H1 (cell line): ENCODE measurements at regions of chr12 and their contacts with region 1.

Region 1: GRCh38 chr12:112992541-112993398 is 14.5 kb downstream of the OAS2 start:
- DNase-seq: peak; percentile 29 to 91
- H3K4me3 ChIP-seq: no peak overlapping the region
- H3K27ac ChIP-seq: no peak overlapping the region
- H3K4me1 ChIP-seq: no peaks in the 10 kb centered on the region; a peak in 1 of 7 replicates
- H3K27me3 ChIP-seq: no peaks in the 10 kb centered on the region
- CTCF ChIP-seq: peak; percentile 90 to 99 (median 99)
- EP300 ChIP-seq: no peak
- POLR2A ChIP-seq: no peak
- RAD21 ChIP-seq: peak; percentile 89 to 93

Region 2: DNA sequence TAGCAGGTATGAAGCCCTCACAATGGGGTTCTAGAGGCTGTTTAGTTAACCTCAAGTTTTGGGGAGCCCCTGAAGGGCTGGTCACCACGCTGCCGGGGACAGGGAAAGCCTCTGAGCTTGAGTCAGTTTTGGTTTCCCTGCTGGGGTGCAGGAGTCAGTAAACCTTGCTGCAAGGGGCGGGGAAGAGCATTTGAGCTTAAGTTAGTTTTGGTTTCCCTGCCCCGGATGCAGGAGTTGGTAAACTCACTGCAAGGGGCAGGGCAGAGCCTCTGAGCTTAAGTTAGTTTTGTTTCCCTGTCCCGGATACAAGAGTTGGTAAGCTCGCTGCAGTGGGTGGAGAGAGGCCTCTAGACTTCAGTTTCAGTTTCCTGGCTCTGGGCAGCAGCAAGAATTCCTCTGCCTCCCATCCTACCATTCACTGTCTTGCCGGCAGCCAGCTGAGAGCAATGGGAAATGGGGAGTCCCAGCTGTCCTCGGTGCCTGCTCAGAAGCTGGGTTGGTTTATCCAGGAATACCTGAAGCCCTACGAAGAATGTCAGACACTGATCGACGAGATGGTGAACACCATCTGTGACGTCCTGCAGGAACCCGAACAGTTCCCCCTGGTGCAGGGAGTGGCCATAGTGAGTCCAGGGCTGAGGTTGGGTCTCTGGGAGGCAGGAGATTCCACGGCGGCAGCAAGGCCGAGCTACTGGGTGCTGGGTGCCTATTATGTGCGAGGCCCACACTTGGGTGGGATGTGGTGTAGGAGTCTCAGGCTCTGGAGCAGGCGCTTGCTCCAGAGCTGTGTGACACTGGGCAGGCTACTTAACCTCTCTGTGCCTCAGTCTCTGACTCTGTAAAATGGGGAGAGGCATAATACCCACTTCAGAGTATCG is 14.4 kb before region 1 on chr12 and contains the start of gene OAS2:
- CTCF ChIA-PET with region 1: interaction called, 24 read pairs
- POLR2A ChIA-PET with region 1: no interaction called
- DNase-seq: no peak
- H3K4me3 ChIP-seq: no peak within 1 kb of the TSS
- H3K27ac ChIP-seq: no peak within 1 kb of the TSS
- H3K4me1 ChIP-seq: peaks cover 0 to 5% (median 0%) of the 10 kb centered on the region in 4 experiments; a peak in 1 of 7 replicates
- H3K27me3 ChIP-seq: no peaks in the 10 kb centered on the region; a peak in 2 of 7 replicates
- CTCF ChIP-seq: no peak
- EP300 ChIP-seq: no peak
- POLR2A ChIP-seq: no peak
- RAD21 ChIP-seq: no peak
- total RNA-seq, gene OAS2: not detected in 2 replicates

Region 3: DNA sequence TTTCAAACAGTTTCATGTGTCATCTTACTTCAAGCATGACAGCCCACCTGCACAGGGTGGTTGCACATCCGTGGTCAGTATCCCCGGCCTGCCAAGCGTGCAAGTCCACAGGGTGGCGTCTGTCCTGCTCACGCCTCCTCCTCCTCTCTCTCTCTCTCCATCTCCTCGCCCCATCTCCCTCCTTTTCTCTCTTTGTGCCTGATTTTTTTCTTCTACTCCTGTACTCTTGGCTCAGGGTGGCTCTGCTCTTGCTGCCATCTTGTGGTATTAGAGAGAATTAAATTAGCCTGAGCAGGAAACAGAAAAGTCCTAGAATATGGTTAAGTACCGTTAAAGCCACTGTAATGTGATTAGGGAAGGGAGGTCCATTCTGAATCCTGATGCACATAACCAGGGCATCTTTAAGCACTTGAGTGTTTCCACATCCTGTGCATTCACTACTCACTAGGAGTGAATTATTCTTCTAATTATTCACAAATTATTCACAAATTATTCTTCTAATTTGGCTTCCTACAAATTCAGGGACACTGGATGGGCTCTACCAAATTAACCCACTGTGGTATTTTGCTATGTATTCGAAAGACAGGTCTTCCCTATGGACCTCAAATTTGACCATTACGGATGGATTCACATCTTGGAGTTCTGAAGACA is 38.2 kb after region 1 on chr12:
- CTCF ChIA-PET with region 1: interaction called, 55 read pairs
- POLR2A ChIA-PET with region 1: no interaction called
- DNase-seq: peak; percentile 34 to 51
- H3K4me3 ChIP-seq: no peak overlapping the region
- H3K27ac ChIP-seq: no peak overlapping the region
- H3K4me1 ChIP-seq: peaks cover 0 to 4% (median 2%) of the 10 kb centered on the region in 4 experiments; a peak in 4 of 7 replicates
- H3K27me3 ChIP-seq: no peaks in the 10 kb centered on the region
- CTCF ChIP-seq: peak; percentile 54 to 84 (median 65)
- EP300 ChIP-seq: no peak
- POLR2A ChIP-seq: no peak
- RAD21 ChIP-seq: peak; percentile 67 to 77

Region 4: GRCh38 chr12:113065126-113066007 is 72.6 kb after region 1 on chr12:
- CTCF ChIA-PET with region 1: interaction called, 28 read pairs
- POLR2A ChIA-PET with region 1: no interaction called
- DNase-seq: peak in 1 of 2 experiments; percentile 91
- H3K4me3 ChIP-seq: peak overlapping the region in 3 of 4 experiments; percentile 8 to 52 (median 19); a peak in 5 of 8 replicates
- H3K27ac ChIP-seq: no peak overlapping the region
- H3K4me1 ChIP-seq: peaks cover 0 to 27% (median 15%) of the 10 kb centered on the region in 4 experiments; a peak in 6 of 7 replicates
- H3K27me3 ChIP-seq: peaks cover 0 to 2% (median 0%) of the 10 kb centered on the region in 4 experiments; a peak in 3 of 7 replicates
- CTCF ChIP-seq: no peak
- EP300 ChIP-seq: no peak
- POLR2A ChIP-seq: no peak
- RAD21 ChIP-seq: no peak

Region 5: DNA sequence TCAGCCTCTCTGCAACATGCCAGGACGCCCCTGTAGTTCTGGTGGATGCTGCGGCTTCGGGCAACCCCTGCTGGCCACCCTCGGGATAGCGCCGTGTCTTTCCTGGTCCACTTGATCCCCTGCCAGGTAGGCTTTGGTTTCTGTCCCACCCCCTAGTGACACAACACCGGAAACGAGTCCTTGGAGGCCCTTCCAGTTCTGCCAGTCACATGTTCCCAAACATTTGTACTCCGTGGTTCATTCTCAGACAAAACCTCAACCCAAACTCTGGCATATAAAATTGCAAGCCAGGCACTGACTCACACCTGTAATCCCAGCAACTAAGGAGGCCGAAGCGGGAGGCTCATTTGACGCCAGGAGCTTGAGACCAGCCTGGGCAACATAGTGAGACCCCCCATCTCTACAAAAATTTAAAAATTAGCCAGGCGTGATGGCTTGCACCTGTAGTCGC is 105.7 kb after region 1 on chr12:
- CTCF ChIA-PET with region 1: interaction called, 67 read pairs
- POLR2A ChIA-PET with region 1: no interaction called
- DNase-seq: peak; percentile 78 to 97
- H3K4me3 ChIP-seq: no peak overlapping the region
- H3K27ac ChIP-seq: no peak overlapping the region
- H3K4me1 ChIP-seq: peaks cover 0 to 11% (median 5%) of the 10 kb centered on the region in 4 experiments; a peak in 5 of 7 replicates
- H3K27me3 ChIP-seq: no peaks in the 10 kb centered on the region
- CTCF ChIP-seq: peak; percentile 95 to 97 (median 96)
- EP300 ChIP-seq: no peak
- POLR2A ChIP-seq: no peak
- RAD21 ChIP-seq: peak; percentile 96 to 97

Region 6: GRCh38 chr12:113152835-113153814 is 160.4 kb after region 1 on chr12:
- CTCF ChIA-PET with region 1: interaction called, 17 read pairs
- POLR2A ChIA-PET with region 1: no interaction called
- DNase-seq: peak; percentile 51 to 86
- H3K4me3 ChIP-seq: peak overlapping the region; percentile 29 to 59 (median 50)
- H3K27ac ChIP-seq: no peak overlapping the region
- H3K4me1 ChIP-seq: peaks cover 7 to 23% (median 19%) of the 10 kb centered on the region in 4 experiments
- H3K27me3 ChIP-seq: peaks cover 1 to 34% (median 26%) of the 10 kb centered on the region in 4 experiments
- CTCF ChIP-seq: peak; percentile 53 to 61 (median 60)
- EP300 ChIP-seq: no peak
- POLR2A ChIP-seq: no peak
- RAD21 ChIP-seq: peak; percentile 64 to 74